ENCODE measurements at regions of chr20 and their contacts with region 1.

Region 1: GRCh38 chr20:48619473-48620268 is 208.1 kb downstream of the PREX1 start:
- DNase-seq: no peak

Region 2: DNA sequence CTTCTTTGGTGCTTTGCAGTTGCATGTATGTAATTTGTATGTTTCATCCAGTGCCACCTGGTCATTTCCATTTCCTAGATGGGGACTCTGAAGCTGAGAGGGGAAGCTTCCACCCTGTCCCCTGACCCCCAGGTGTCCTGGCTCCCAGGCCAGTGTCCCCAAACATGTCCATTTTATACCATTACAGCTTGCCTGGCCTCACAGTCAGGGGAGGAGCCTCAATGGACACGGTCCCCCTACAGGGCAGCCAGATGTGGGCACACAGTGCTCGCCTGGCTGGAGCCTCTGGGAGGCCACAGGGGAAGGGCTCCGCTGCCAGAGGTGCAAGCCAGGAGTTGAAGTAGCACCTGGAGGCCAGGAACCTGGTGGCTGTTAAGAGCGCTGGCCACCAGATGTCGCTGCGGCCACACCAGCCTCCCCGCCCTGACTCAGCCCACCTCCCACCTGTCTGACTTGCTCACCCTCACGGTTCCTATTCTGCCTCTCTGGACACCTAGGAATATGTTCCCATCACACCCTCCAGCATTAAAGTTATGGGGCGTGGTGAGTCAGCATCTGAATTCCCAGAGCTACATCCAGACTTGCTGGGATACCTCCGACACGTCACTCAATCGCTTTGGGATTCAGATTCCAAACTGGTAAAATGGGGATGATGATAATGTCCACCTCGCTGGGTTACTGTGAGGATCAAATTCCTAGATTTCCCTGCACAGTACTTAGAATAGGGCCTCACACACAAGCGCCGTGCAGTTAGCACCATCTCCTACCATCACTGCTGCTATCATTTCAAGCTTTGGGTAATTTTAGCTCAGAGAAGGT is 941.8 kb before region 1 on chr20:
- in situ Hi-C with region 1: loop called (anchors 10 kb)
- DNase-seq: peak; percentile 70

Region 3: DNA sequence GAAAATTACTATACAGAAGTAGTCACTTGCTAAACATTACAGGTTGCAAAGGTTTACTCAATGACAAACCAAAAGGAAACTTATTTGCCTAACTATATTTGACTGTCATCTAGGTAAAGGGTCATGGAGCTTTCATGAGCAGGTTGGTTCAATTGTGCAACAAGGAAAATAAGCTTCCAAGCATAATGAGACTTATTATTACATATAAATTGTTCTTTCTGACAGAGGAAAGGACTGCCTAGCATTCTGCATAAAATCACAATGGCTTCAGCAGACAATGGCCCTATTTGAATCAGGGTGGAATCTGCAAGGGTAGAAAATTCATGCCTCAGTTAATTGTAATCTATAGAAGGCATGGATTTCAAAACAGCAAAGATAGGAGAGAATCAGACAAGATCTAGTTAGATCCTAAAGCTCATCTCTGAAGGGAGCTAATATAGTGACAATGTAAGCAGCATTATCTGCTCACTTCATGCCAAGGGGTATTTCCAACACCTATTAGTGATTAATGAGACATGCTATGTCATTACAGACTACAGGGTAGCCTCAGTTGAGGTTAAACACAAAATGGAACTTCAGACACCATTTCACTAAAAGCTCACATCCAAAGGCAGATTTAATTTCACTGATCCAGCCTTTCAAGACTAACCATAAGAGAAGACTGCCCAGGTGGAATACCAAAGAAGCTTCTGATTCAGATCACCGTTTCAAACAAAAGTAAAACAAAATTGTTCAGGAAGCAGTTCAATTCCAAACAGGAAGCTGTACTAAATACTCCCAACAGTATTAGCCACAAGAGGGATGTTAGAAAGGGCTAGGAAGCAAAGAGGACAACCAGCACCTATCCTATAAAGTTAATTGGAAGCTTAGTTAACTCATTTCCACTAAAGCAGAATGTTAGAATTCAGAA is 560.0 kb after region 1 on chr20:
- in situ Hi-C with region 1: no loop called
- DNase-seq: no peak

Measured in KBM-7 (cell line).